Gastrocnemius medialis (tissue), 4 donors: ENCODE measurements at regions of chr4 and their contacts with region 1.

Region 1: GRCh38 chr4:7872264-7872771 is 67.3 kb downstream of the AFAP1 start:
- DNase-seq: peak; percentile 85 to 91
- ATAC-seq: peak; percentile 89
- H3K4me3 ChIP-seq: peak overlapping the region in 3 of 4 donors; percentile 8 to 35 (median 34)
- H3K27ac ChIP-seq: peak overlapping the region; percentile 78 to 83 (median 82)
- H3K4me1 ChIP-seq: peaks cover 24 to 25% of the 10 kb centered on the region in 2 donors
- H3K27me3 ChIP-seq: no peaks in the 10 kb centered on the region
- CTCF ChIP-seq: no peak
- POLR2A ChIP-seq: no peak

Region 2: DNA sequence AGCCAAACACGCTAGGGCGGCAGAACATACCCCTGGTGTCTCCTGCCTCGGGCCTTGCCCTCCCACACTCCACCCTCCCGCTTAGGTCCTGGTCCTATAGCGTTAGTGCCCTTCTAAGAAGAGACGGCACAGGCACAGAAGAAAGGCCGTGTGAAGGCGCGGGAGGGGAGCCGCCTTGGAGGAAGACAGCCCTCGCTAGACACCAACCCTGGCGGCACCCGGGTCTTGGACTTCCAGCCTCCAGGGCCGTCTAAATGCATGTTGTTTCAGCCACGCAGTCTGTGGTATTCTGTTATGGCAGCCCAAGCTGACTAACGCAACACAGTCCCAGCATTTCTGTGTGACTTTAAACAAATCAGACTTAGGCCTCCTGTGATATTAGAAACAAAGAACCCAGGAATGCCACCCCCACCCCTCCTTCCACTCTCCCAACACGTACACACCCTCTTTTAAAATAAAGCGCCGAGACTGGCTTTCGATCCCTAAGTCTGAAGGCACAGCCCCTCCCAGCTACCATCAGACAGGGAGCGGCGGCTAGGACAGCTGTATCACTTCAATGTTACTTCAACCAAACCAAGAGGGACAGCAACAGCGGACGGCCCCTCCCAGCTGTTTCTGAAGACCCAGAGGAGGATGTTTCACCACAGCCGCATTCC is 60.7 kb before region 1 on chr4:
- in situ Hi-C with region 1: no loop called
- intact Hi-C with region 1: no loop called
- DNase-seq: no peak
- ATAC-seq: peak in 1 of 2 donors; percentile 25
- H3K4me3 ChIP-seq: no peak overlapping the region
- H3K27ac ChIP-seq: no peak overlapping the region
- H3K4me1 ChIP-seq: peaks cover 18 to 19% of the 10 kb centered on the region in 2 donors
- H3K27me3 ChIP-seq: no peaks in the 10 kb centered on the region
- CTCF ChIP-seq: no peak
- POLR2A ChIP-seq: no peak

Region 3: GRCh38 chr4:7939377-7940108 is 67.2 kb after region 1 on chr4 and contains the start of gene AFAP1:
- in situ Hi-C with region 1: no loop called
- intact Hi-C with region 1: loop called (anchors 5 kb)
- DNase-seq: peak; percentile 58 to 75
- ATAC-seq: peak; percentile 82 to 89
- H3K4me3 ChIP-seq: peak within 1 kb of the TSS; percentile 59 to 79 (median 68)
- H3K27ac ChIP-seq: peak within 1 kb of the TSS; percentile 42 to 77 (median 63)
- H3K4me1 ChIP-seq: peaks cover 0 to 4% of the 10 kb centered on the region in 2 donors
- H3K27me3 ChIP-seq: peaks cover 0 to 20% (median 19%) of the 10 kb centered on the region in 3 donors
- CTCF ChIP-seq: no peak
- POLR2A ChIP-seq: peak; percentile 48 to 67
- total RNA-seq, gene AFAP1: 1.5 to 8.6 (median 3.5) TPM

Region 4: GRCh38 chr4:8090312-8090711 is 218.0 kb after region 1 on chr4:
- in situ Hi-C with region 1: no loop called
- intact Hi-C with region 1: no loop called
- DNase-seq: no peak
- ATAC-seq: peak; percentile 25 to 40
- H3K4me3 ChIP-seq: no peak overlapping the region
- H3K27ac ChIP-seq: peak overlapping the region; percentile 54 to 70 (median 62)
- H3K4me1 ChIP-seq: peaks cover 0 to 8% of the 10 kb centered on the region in 2 donors
- H3K27me3 ChIP-seq: no peaks in the 10 kb centered on the region
- CTCF ChIP-seq: peak in 1 of 5 experiments; percentile 10
- POLR2A ChIP-seq: peak in 1 of 2 donors; percentile 13